GM12878 (cell line): ENCODE measurements at regions of chr5 and their contacts with region 1.

Region 1: GRCh38 chr5:14156650-14157493 is 13.7 kb downstream of the TRIO start:
- DNase-seq: peak; percentile 67
- ATAC-seq: peak; percentile 75
- H3K4me3 ChIP-seq: peak overlapping the region; percentile 20
- H3K27ac ChIP-seq: peak overlapping the region; percentile 92
- H3K4me1 ChIP-seq: peaks cover 60% of the 10 kb centered on the region
- H3K27me3 ChIP-seq: no peaks in the 10 kb centered on the region
- CTCF ChIP-seq: no peak
- EP300 ChIP-seq: peak in 1 of 2 experiments; percentile 61; a peak in 2 of 4 replicates
- POLR2A ChIP-seq: peak; percentile 39; the same call in 1 of the 2 replicates
- RAD21 ChIP-seq: peak; percentile 8; the same call in 1 of the 2 replicates

Region 2: GRCh38 chr5:14081791-14082190 is 75.1 kb before region 1 on chr5:
- CTCF ChIA-PET with region 1: no interaction called
- POLR2A ChIA-PET with region 1: no interaction called
- RAD21 ChIA-PET with region 1: no interaction called
- SMC1A ChIA-PET with region 1: no interaction called
- in situ Hi-C with region 1: no loop called
- intact Hi-C with region 1: no loop called
- DNase-seq: no peak
- ATAC-seq: no peak
- H3K4me3 ChIP-seq: no peak overlapping the region
- H3K27ac ChIP-seq: no peak overlapping the region
- H3K4me1 ChIP-seq: no peaks in the 10 kb centered on the region
- H3K27me3 ChIP-seq: peaks cover 0 to 2% of the 10 kb centered on the region in 2 experiments; a peak in 1 of 4 replicates
- CTCF ChIP-seq: no peak
- EP300 ChIP-seq: no peak
- POLR2A ChIP-seq: no peak
- RAD21 ChIP-seq: no peak

Region 3: GRCh38 chr5:14097998-14098471 is 58.8 kb before region 1 on chr5:
- CTCF ChIA-PET with region 1: no interaction called
- POLR2A ChIA-PET with region 1: no interaction called
- RAD21 ChIA-PET with region 1: no interaction called
- SMC1A ChIA-PET with region 1: no interaction called
- in situ Hi-C with region 1: no loop called
- intact Hi-C with region 1: no loop called
- DNase-seq: no peak
- ATAC-seq: no peak
- H3K4me3 ChIP-seq: no peak overlapping the region
- H3K27ac ChIP-seq: no peak overlapping the region
- H3K4me1 ChIP-seq: no peaks in the 10 kb centered on the region
- H3K27me3 ChIP-seq: peaks cover 0 to 3% of the 10 kb centered on the region in 2 experiments; a peak in 1 of 4 replicates
- CTCF ChIP-seq: no peak
- EP300 ChIP-seq: no peak
- POLR2A ChIP-seq: no peak
- RAD21 ChIP-seq: no peak

Region 4: GRCh38 chr5:14142827-14143548 is 13.9 kb before region 1 on chr5 and contains the start of gene TRIO:
- CTCF ChIA-PET with region 1: interaction called, 16 read pairs
- POLR2A ChIA-PET with region 1: interaction called, 54 read pairs
- RAD21 ChIA-PET with region 1: interaction called, 120 read pairs
- SMC1A ChIA-PET with region 1: interaction called, 430 read pairs
- in situ Hi-C with region 1: no loop called
- intact Hi-C with region 1: no loop called
- DNase-seq: no peak
- ATAC-seq: peak; percentile 63
- H3K4me3 ChIP-seq: peak within 1 kb of the TSS; percentile 100
- H3K27ac ChIP-seq: peak within 1 kb of the TSS; percentile 70
- H3K4me1 ChIP-seq: peaks cover 14% of the 10 kb centered on the region
- H3K27me3 ChIP-seq: no peaks in the 10 kb centered on the region
- CTCF ChIP-seq: peak; percentile 44 to 56 (median 53); a peak in 5 of 6 replicates
- EP300 ChIP-seq: no peak
- POLR2A ChIP-seq: peak; percentile 73
- RAD21 ChIP-seq: 0 out of 2 replicates have a peak, but pooled peaks have one; percentile 11
- polyA plus RNA-seq, gene TRIO: 5.1 to 5.8 TPM

Region 5: GRCh38 chr5:14174230-14174637 is 17.4 kb after region 1 on chr5:
- CTCF ChIA-PET with region 1: interaction called, 9 read pairs
- POLR2A ChIA-PET with region 1: interaction called, 314 read pairs
- RAD21 ChIA-PET with region 1: interaction called, 344 read pairs
- SMC1A ChIA-PET with region 1: interaction called, 430 read pairs
- in situ Hi-C with region 1: no loop called
- intact Hi-C with region 1: loop called (anchors 2 kb)
- DNase-seq: peak; percentile 63
- ATAC-seq: peak; percentile 52
- H3K4me3 ChIP-seq: peak overlapping the region; percentile 62
- H3K27ac ChIP-seq: peak overlapping the region; percentile 71
- H3K4me1 ChIP-seq: peaks cover 57% of the 10 kb centered on the region
- H3K27me3 ChIP-seq: no peaks in the 10 kb centered on the region
- CTCF ChIP-seq: no peak
- EP300 ChIP-seq: no peak
- POLR2A ChIP-seq: 0 out of 2 replicates have a peak, but pooled peaks have one; percentile 29
- RAD21 ChIP-seq: no peak

Region 6: DNA sequence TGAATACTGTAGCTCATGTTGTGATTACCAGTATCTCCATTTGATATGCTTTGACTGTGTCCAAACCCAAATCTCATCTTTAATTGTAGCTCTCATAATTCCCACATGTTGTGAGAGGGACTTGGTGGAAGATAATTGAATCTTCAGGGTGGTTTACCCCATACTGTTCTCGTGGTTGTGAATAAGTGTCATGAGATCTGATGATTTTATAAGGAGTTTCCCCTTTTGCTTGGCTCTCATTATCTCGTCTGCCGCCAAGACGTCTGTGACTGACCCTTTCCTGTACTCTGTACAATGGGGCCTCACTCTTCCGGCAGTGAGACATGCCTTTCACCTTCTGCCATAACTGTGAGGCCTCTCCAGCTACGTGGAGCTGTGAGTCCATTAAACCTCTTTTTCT is 45.6 kb after region 1 on chr5:
- CTCF ChIA-PET with region 1: interaction called, 5 read pairs
- POLR2A ChIA-PET with region 1: interaction called, 347 read pairs
- RAD21 ChIA-PET with region 1: interaction called, 373 read pairs
- SMC1A ChIA-PET with region 1: interaction called, 222 read pairs
- in situ Hi-C with region 1: no loop called
- intact Hi-C with region 1: no loop called
- DNase-seq: no peak
- ATAC-seq: peak; percentile 61
- H3K4me3 ChIP-seq: 0 out of 2 replicates have a peak overlapping the region, but pooled peaks have one; percentile 13
- H3K27ac ChIP-seq: peak overlapping the region; percentile 49
- H3K4me1 ChIP-seq: peaks cover 31% of the 10 kb centered on the region
- H3K27me3 ChIP-seq: no peaks in the 10 kb centered on the region
- CTCF ChIP-seq: no peak
- EP300 ChIP-seq: no peak
- POLR2A ChIP-seq: 0 out of 2 replicates have a peak, but pooled peaks have one; percentile 32
- RAD21 ChIP-seq: no peak

Region 7: DNA sequence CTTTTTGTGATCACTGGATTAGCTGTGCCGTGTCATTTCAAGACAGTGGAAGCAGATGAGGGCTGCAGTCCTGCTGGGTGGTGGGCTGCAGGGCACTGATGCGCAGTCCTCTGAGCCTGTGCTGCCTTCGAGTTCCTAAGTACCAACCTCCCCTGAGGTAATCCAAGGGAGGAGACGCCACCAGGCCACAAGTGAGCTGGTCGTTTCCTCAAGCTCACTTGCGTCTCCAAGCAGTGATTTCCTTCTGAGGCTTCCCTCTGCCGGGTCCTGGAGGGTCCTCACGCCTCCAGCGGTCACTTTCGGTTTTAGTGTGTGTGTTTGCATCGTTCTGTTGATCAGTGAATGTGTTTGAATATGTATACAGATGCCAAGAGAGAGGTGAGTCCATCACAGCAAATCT is 102.0 kb after region 1 on chr5:
- CTCF ChIA-PET with region 1: no interaction called
- POLR2A ChIA-PET with region 1: interaction called, 7 read pairs
- RAD21 ChIA-PET with region 1: interaction called, 12 read pairs
- SMC1A ChIA-PET with region 1: interaction called, 6 read pairs
- in situ Hi-C with region 1: no loop called
- intact Hi-C with region 1: no loop called
- DNase-seq: no peak
- ATAC-seq: peak; percentile 65
- H3K4me3 ChIP-seq: peak overlapping the region; percentile 56; the same call in 1 of the 2 replicates
- H3K27ac ChIP-seq: peak overlapping the region; percentile 14
- H3K4me1 ChIP-seq: peaks cover 37% of the 10 kb centered on the region
- H3K27me3 ChIP-seq: no peaks in the 10 kb centered on the region
- CTCF ChIP-seq: peak in 2 of 3 experiments; percentile 24 to 33; a peak in 1 of 6 replicates
- EP300 ChIP-seq: no peak
- POLR2A ChIP-seq: no peak
- RAD21 ChIP-seq: no peak

Region 8: GRCh38 chr5:14664302-14665100 is 507.6 kb after region 1 on chr5 and contains the start of gene OTULIN:
- CTCF ChIA-PET with region 1: no interaction called
- POLR2A ChIA-PET with region 1: no interaction called
- RAD21 ChIA-PET with region 1: interaction called, 6 read pairs
- SMC1A ChIA-PET with region 1: interaction called, 4 read pairs
- in situ Hi-C with region 1: loop called (anchors 25 kb)
- intact Hi-C with region 1: no loop called
- DNase-seq: peak; percentile 80
- ATAC-seq: peak; percentile 74
- H3K4me3 ChIP-seq: peak within 1 kb of the TSS; percentile 84
- H3K27ac ChIP-seq: peak within 1 kb of the TSS; percentile 90
- H3K4me1 ChIP-seq: peaks cover 3% of the 10 kb centered on the region
- H3K27me3 ChIP-seq: no peaks in the 10 kb centered on the region
- CTCF ChIP-seq: no peak
- EP300 ChIP-seq: 0 out of 4 replicates have a peak, but pooled peaks of 1 of the 2 experiments have one; percentile 9
- POLR2A ChIP-seq: peak; percentile 95
- RAD21 ChIP-seq: no peak
- polyA plus RNA-seq, gene OTULIN: 6.6 to 9.9 TPM